Activated CD4-positive, alpha-beta T cell treated with anti-CD3 and anti-CD28 coated beads for 36 hours (primary cell): ENCODE measurements at regions of chr1 and their contacts with region 1.

Region 1: GRCh38 chr1:234149217-234149616 is 224.0 kb upstream of the COA6 start:
- DNase-seq: no peak
- ATAC-seq: peak; percentile 55
- H3K4me3 Mint-ChIP-seq: no peak overlapping the region
- H3K27ac Mint-ChIP-seq: no peak overlapping the region
- H3K4me1 Mint-ChIP-seq: peaks cover 18% of the 10 kb centered on the region
- H3K27me3 Mint-ChIP-seq: peaks cover 23% of the 10 kb centered on the region

Region 2: GRCh38 chr1:234125283-234125682 is 23.9 kb before region 1 on chr1:
- CTCF ChIA-PET with region 1: interaction called, 10 read pairs
- POLR2A ChIA-PET with region 1: no interaction called
- intact Hi-C with region 1: no loop called
- DNase-seq: peak; percentile 73
- ATAC-seq: peak; percentile 73
- H3K4me3 Mint-ChIP-seq: no peak overlapping the region
- H3K27ac Mint-ChIP-seq: no peak overlapping the region
- H3K4me1 Mint-ChIP-seq: no peaks in the 10 kb centered on the region
- H3K27me3 Mint-ChIP-seq: peaks cover 27% of the 10 kb centered on the region

Region 3: GRCh38 chr1:234135501-234135900 is 13.7 kb before region 1 on chr1:
- CTCF ChIA-PET with region 1: no interaction called
- POLR2A ChIA-PET with region 1: no interaction called
- intact Hi-C with region 1: no loop called
- DNase-seq: no peak
- ATAC-seq: no peak
- H3K4me3 Mint-ChIP-seq: no peak overlapping the region
- H3K27ac Mint-ChIP-seq: no peak overlapping the region
- H3K4me1 Mint-ChIP-seq: no peaks in the 10 kb centered on the region
- H3K27me3 Mint-ChIP-seq: peaks cover 9% of the 10 kb centered on the region